Endothelial cell of umbilical vein (primary cell): ENCODE measurements at regions of chr3 and their contacts with region 1.

Region 1: DNA sequence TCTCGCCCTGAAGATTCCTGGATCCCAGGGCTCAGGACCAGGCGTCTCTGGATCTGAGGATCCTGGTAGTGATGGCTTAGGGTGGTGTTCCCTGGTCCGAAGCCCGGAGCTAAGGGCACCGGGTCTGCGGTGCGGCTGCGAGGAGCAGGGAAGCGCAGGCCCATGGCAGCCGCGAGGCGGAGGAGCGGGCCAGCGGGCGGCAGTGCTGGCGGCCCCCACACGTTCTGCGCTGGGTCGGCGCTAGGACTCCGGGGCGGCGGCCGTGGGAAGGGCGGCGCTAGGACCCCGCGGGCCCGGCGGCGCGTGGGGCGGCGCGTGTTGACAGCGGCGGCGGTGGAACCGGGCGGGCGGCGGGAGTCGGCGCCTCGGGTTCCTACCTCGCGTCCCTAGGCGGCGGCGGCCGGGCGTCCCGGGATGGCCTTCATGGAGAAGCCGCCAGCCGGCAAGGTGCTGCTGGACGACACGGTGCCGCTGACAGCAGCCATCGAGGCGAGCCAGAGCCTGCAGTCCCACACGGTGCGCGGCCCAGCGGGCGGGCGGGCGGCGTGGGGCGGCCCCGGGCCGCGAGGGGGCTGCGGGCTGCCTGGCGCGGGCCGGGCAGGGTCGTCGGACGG is at the start of gene PXK:
- DNase-seq: peak; percentile 75
- H3K4me3 ChIP-seq: peak within 1 kb of the TSS; percentile 63 to 71 (median 63)
- H3K27ac ChIP-seq: peak within 1 kb of the TSS; percentile 41
- H3K4me1 ChIP-seq: peaks cover 12% of the 10 kb centered on the region
- H3K27me3 ChIP-seq: no peaks in the 10 kb centered on the region
- CTCF ChIP-seq: peak in 1 of 2 donors; percentile 32
- POLR2A ChIP-seq: no peak
- total RNA-seq, gene PXK: 11.1 and 14.6 TPM in 2 replicates

Region 2: DNA sequence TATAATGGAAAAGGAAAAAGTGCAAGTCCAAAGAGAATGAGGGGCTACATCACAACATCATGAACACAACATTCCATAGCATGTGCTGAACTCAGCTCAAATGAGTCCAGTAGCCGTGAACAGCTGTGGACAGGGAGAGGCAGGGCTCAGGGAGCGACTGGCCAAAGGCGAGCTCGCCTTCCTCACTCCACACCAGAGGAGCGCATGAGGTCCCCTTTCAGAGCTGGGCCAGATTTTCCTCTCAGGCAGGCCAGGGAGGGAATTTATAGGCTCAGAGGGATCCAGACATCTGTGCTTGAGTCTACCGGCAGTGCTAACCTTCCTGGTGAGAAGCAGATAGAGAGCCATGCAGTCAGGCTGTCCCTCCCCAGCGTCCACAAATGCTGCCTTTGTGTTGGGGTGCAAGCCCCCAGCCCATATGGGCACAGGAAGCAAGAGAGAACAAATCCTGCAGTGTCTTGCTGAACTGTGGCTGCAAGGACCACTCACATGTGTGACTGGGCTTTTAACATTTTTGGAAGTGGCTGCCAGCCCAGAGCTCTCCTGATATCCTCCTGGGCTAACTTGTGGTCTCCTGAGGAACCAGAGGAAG is 1563.5 kb before region 1 on chr3:
- CTCF ChIA-PET with region 1: no interaction called
- POLR2A ChIA-PET with region 1: no interaction called
- dilution Hi-C with region 1: no loop called
- intact Hi-C with region 1: loop called (anchors 10 kb)
- DNase-seq: no peak
- H3K4me3 ChIP-seq: no peak overlapping the region
- H3K27ac ChIP-seq: no peak overlapping the region
- H3K4me1 ChIP-seq: no peaks in the 10 kb centered on the region
- H3K27me3 ChIP-seq: no peaks in the 10 kb centered on the region
- CTCF ChIP-seq: no peak
- POLR2A ChIP-seq: no peak

Region 3: GRCh38 chr3:57998366-57999283 is 334.1 kb before region 1 on chr3:
- CTCF ChIA-PET with region 1: no interaction called
- POLR2A ChIA-PET with region 1: no interaction called
- dilution Hi-C with region 1: no loop called
- intact Hi-C with region 1: no loop called
- DNase-seq: peak; percentile 54
- H3K4me3 ChIP-seq: no peak overlapping the region
- H3K27ac ChIP-seq: no peak overlapping the region
- H3K4me1 ChIP-seq: peaks cover 10% of the 10 kb centered on the region
- H3K27me3 ChIP-seq: no peaks in the 10 kb centered on the region
- CTCF ChIP-seq: no peak
- POLR2A ChIP-seq: no peak

Region 4: DNA sequence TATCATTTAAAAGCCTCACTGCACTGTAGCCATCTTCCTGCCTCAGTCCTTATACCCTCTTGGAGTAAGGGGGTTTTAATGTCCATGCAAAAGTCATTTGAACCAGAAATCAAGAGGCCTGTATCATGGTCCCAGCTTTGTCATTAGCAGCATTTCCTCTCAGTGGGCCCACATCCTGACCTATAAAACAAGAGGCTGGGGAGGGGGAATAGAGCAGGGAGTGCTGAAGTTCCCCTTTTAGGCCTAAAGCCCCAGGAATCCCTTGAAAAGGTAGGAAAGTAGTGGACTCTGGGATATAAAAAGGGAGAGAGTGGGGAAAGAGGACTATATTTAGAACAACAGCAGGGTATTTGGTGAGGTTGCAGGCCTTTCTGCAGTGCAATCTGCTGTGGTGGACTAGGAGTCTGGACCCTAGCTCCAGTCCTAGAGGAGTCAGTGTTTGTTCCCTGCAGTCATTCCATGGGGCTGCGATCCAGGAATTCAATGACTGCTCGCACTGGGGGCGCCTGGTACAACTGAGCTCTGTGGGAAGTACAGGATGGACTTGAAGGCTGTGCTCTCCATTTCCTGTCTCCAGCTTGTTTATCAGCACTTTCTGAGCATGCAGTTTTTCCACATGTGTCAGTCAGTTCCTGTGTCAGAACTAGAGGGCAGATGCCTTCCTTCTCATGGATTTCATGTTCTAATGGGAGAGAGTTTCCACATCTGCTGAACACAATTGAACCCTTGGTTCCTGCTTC is 54.1 kb after region 1 on chr3:
- CTCF ChIA-PET with region 1: interaction called, 4 read pairs
- POLR2A ChIA-PET with region 1: no interaction called
- dilution Hi-C with region 1: no loop called
- intact Hi-C with region 1: loop called (anchors 2 kb)
- DNase-seq: peak; percentile 95
- H3K4me3 ChIP-seq: no peak overlapping the region
- H3K27ac ChIP-seq: peak overlapping the region; percentile 71
- H3K4me1 ChIP-seq: peaks cover 40% of the 10 kb centered on the region
- H3K27me3 ChIP-seq: no peaks in the 10 kb centered on the region
- CTCF ChIP-seq: peak in 1 of 2 donors; percentile 1
- POLR2A ChIP-seq: peak; percentile 57

Region 5: GRCh38 chr3:58414538-58415197 is 82.0 kb after region 1 on chr3:
- CTCF ChIA-PET with region 1: interaction called, 18 read pairs
- POLR2A ChIA-PET with region 1: no interaction called
- dilution Hi-C with region 1: no loop called
- intact Hi-C with region 1: loop called (anchors 1 kb)
- DNase-seq: peak; percentile 79
- H3K4me3 ChIP-seq: no peak overlapping the region
- H3K27ac ChIP-seq: no peak overlapping the region
- H3K4me1 ChIP-seq: no peaks in the 10 kb centered on the region
- H3K27me3 ChIP-seq: no peaks in the 10 kb centered on the region
- CTCF ChIP-seq: peak; percentile 64
- POLR2A ChIP-seq: no peak

Region 6: DNA sequence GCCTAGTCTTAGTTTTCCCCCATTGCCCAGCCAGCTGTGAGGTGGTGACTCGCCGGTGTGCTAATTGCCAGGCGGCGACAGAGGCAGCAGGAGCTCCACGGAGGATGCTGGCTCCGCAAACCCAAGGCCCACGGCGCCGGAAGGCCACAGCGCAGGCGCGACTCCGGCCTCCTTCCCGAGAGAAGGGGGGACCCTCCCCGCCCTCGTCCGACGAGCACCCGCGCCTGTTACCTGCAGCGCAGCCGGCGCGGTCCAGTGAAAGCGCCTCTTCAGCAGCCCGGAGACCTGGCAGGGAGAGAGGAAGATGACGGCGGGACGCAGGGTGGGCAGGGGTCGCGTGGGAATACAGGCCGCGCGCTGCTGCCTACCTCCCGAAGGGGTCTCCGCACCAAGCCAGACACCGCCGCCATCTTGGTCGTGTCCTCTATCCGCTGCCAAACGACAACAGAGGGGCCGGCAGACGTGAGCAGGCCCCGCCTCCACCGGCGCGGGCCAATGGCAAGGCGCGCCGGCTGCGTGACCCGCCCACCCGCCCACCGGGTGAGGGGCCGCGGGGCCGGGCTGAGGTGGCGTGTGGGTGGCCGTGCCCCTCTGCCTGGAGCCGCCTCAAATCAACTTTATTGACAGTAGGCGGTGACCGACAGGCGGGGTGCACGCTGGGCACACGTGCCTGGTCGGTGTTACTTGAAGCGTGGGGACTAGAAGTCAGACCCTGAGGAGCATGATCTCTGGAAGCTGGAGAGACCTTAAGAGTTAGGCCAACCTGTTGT is 100.9 kb after region 1 on chr3 and contains the start of gene PDHB:
- CTCF ChIA-PET with region 1: no interaction called
- POLR2A ChIA-PET with region 1: no interaction called
- dilution Hi-C with region 1: no loop called
- intact Hi-C with region 1: loop called (anchors 5 kb)
- DNase-seq: peak; percentile 94
- H3K4me3 ChIP-seq: peak within 1 kb of the TSS; percentile 51 to 92 (median 85)
- H3K27ac ChIP-seq: peak within 1 kb of the TSS; percentile 69
- H3K4me1 ChIP-seq: peaks cover 5% of the 10 kb centered on the region
- H3K27me3 ChIP-seq: peaks cover 3 to 5% of the 10 kb centered on the region in 2 experiments
- CTCF ChIP-seq: no peak
- POLR2A ChIP-seq: peak; percentile 91
- total RNA-seq, gene PDHB: 59.3 and 60.8 TPM in 2 replicates

Region 7: GRCh38 chr3:58491506-58492402 is 159.1 kb after region 1 on chr3 and contains the start of gene KCTD6:
- CTCF ChIA-PET with region 1: interaction called, 10 read pairs
- POLR2A ChIA-PET with region 1: no interaction called
- dilution Hi-C with region 1: no loop called
- intact Hi-C with region 1: loop called (anchors 1 kb)
- DNase-seq: peak; percentile 97
- H3K4me3 ChIP-seq: peak within 1 kb of the TSS; percentile 67 to 90 (median 86)
- H3K27ac ChIP-seq: peak within 1 kb of the TSS; percentile 21
- H3K4me1 ChIP-seq: peaks cover 16% of the 10 kb centered on the region
- H3K27me3 ChIP-seq: peaks cover 2 to 5% of the 10 kb centered on the region in 2 experiments
- CTCF ChIP-seq: peak; percentile 79 to 80
- POLR2A ChIP-seq: no peak
- total RNA-seq, gene KCTD6: 6.4 and 7.4 TPM in 2 replicates

Region 8: DNA sequence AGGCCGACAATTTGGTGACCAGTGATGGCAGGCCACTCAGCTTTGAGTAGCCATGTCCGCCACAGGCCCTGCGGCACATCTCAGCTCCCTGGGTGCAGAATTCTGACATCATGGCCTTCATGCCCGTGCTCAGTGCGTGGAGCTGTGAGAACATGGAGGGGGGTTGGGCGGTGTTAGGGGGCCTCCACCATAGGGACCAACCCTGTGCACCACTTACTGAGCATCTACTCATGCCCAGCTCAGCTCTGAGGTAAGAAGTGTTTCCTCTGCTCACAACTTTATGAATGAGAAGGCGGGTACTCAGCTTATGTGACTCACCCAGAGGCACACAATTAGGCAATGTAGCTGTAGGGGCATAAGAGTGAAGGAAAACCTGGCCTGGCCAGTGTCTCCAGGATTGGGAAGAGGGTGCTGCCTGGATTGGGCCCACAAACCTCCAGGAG is 193.9 kb after region 1 on chr3:
- CTCF ChIA-PET with region 1: interaction called, 4 read pairs
- POLR2A ChIA-PET with region 1: no interaction called
- dilution Hi-C with region 1: no loop called
- intact Hi-C with region 1: loop called (anchors 5 kb)
- DNase-seq: peak; percentile 58
- H3K4me3 ChIP-seq: no peak overlapping the region
- H3K27ac ChIP-seq: no peak overlapping the region
- H3K4me1 ChIP-seq: peaks cover 18% of the 10 kb centered on the region
- H3K27me3 ChIP-seq: no peaks in the 10 kb centered on the region
- CTCF ChIP-seq: no peak
- POLR2A ChIP-seq: no peak